ENCODE measurements at regions of chr6 and their contacts with region 1.

Region 1: DNA sequence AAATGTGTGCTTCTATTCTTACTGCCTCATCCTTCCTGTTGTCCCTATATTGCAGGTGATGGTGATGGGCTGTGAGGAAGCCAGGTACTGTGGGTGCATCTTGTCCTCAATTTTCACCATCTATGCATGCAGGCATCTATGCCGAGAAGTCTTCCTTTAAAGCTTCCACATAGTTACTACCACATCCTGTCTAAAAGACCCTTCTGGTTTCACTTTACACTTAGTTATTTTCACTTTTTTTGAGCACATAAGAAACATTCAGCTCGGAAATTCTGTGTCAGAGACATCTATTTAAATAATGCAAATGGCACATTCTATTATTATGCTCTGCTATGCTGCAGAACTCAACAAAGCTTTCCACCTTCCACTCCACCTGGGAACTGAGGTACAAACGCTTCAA is 28.2 kb upstream of the FABP7 start:
- DNase-seq: no peak
- H3K4me3 ChIP-seq: no peak overlapping the region
- H3K27ac ChIP-seq: no peak overlapping the region
- H3K4me1 ChIP-seq: peaks cover 18% of the 10 kb centered on the region
- H3K27me3 ChIP-seq: no peaks in the 10 kb centered on the region
- CTCF ChIP-seq: no peak

Region 2: DNA sequence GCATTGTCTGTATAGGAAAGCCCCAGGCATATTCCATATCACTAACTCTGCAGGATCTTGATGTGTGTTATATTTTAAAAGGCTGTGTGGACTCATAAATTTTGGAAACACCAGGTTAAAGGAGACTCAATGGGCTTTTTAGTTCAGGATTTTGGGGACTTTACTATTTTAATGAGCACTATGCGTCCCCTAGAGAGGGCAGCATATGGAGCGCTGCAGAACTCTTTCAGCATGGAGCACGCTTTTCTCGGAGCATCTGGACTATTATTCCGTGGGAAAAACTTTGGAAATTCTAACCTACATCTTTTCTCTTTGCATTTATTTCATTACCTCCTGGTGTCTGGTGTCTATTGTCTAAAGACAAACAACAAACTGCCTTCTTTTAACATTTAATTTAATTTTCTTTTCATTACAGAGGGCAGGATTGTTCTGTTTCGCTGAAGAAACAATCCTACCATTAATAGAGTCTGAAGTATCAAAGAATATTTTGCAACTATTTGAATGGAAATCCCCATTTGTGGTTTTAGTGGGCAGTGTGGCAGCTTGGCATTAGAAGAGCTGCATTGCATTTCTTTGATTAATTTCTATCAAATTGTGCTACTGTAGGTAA is 751.8 kb before region 1 on chr6:
- CTCF ChIA-PET with region 1: no interaction called
- POLR2A ChIA-PET with region 1: no interaction called
- intact Hi-C with region 1: no loop called
- DNase-seq: no peak
- H3K4me3 ChIP-seq: no peak overlapping the region
- H3K27ac ChIP-seq: no peak overlapping the region
- H3K4me1 ChIP-seq: peaks cover 10% of the 10 kb centered on the region
- H3K27me3 ChIP-seq: no peaks in the 10 kb centered on the region
- CTCF ChIP-seq: no peak

Region 3: GRCh38 chr6:122770835-122771601 is 19.7 kb after region 1 on chr6:
- CTCF ChIA-PET with region 1: no interaction called
- POLR2A ChIA-PET with region 1: interaction called, 12 read pairs
- intact Hi-C with region 1: no loop called
- DNase-seq: no peak
- H3K4me3 ChIP-seq: no peak overlapping the region
- H3K27ac ChIP-seq: no peak overlapping the region
- H3K4me1 ChIP-seq: no peaks in the 10 kb centered on the region
- H3K27me3 ChIP-seq: no peaks in the 10 kb centered on the region
- CTCF ChIP-seq: no peak

Measured in A673 (cell line).